Naive thymus-derived CD4-positive, alpha-beta T cell (primary cell): ENCODE measurements at regions of chr3 and their contacts with region 1.

Region 1: DNA sequence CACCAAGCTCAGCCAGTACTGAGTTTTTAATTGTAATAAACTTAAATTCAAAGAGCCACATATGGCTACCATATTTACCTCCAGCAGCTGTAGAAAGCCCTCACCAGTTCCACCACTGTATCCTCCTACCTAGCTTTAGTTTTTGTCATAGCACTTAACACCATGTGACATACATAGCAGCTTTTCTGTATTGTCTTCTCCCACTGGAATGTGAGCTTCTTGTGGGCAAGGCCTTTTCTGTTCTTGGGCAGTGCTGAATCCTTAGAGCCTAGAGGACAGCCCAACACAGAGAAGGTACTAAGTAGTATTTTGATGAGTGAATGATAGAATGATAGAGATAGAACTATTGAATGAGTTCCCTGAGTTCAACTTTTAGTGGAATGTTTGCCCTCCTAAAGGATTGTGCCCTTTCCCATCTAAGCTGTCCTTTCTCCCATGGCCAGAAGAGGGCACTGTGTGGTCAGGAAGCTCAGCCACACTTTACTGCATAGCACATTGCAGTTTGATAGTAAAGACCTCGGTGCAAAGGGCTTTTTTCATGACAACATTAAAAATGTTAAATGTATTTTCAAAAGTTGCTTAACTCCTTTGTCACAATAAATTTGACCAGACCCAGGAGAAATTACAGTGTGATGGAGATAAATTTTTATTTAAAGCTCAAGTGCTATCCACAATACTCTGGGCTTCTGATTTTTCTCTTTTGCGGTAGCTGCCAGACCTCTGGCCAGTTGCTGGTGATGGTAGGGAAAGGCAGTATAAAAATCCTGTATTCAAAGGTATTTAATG is 115.8 kb downstream of the GHSR start:
- DNase-seq: peak; percentile 3 to 55 (median 41)
- ATAC-seq: peak; percentile 92
- H3K4me3 ChIP-seq: no peak overlapping the region
- H3K4me3 Mint-ChIP-seq: no peak overlapping the region
- H3K27ac ChIP-seq: no peak overlapping the region
- H3K27ac Mint-ChIP-seq: peak overlapping the region in 2 of 9 donors; percentile 12 to 36
- H3K4me1 ChIP-seq: no peaks in the 10 kb centered on the region
- H3K4me1 Mint-ChIP-seq: peaks cover 0 to 10% (median 4%) of the 10 kb centered on the region in 7 donors
- H3K27me3 ChIP-seq: no peaks in the 10 kb centered on the region
- H3K27me3 Mint-ChIP-seq: no peaks in the 10 kb centered on the region

Region 2: DNA sequence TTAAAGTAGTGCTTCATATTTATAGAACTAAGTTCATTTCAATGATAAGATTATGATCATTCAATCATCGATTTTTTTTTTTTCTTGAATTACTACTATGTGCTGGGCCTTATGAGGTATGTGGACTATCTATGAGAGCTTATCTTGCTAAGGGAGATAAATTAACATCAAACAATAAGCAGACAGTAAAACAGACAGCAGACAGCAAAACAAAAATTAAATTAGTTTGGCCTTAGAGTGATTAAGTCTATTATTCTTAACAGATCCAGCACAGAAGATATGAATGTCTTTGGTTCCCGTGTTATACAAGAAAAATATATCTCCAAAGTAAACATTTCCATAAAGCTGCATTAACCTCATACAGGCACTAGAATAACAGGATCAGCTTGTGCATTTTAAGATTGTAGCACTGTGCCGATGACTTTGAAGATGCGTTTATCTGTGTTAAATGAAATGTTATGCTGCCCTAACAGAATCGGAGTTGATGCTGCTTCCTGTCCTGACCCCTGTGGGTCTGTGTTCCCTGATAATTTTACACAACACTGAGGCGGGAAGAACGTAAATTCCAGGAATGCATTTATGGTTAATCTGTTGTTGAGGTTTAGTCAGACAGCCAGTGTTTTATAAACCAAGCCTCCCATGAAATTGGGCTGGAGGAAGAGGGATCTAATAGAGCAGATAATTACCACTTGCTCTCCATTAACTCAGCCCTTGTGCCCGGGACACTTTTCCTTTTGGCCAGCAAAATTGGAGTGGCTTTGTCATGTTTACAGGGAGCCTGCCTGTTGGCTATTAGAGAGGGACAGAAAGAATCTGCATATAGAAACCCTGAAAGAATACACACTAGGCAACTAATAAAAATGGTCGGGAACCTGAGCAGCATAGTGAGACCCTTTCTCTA is 35.0 kb after region 1 on chr3:
- CTCF ChIA-PET with region 1: no interaction called
- POLR2A ChIA-PET with region 1: no interaction called
- intact Hi-C with region 1: no loop called
- DNase-seq: no peak
- ATAC-seq: no peak
- H3K4me3 ChIP-seq: no peak overlapping the region
- H3K4me3 Mint-ChIP-seq: no peak overlapping the region
- H3K27ac ChIP-seq: no peak overlapping the region
- H3K27ac Mint-ChIP-seq: no peak overlapping the region
- H3K4me1 ChIP-seq: no peaks in the 10 kb centered on the region
- H3K4me1 Mint-ChIP-seq: no peaks in the 10 kb centered on the region
- H3K27me3 ChIP-seq: no peaks in the 10 kb centered on the region
- H3K27me3 Mint-ChIP-seq: no peaks in the 10 kb centered on the region

Region 3: GRCh38 chr3:172384836-172385235 is 52.4 kb after region 1 on chr3:
- CTCF ChIA-PET with region 1: no interaction called
- POLR2A ChIA-PET with region 1: no interaction called
- intact Hi-C with region 1: no loop called
- DNase-seq: no peak
- ATAC-seq: no peak
- H3K4me3 ChIP-seq: no peak overlapping the region
- H3K4me3 Mint-ChIP-seq: no peak overlapping the region
- H3K27ac ChIP-seq: no peak overlapping the region
- H3K27ac Mint-ChIP-seq: no peak overlapping the region
- H3K4me1 ChIP-seq: no peaks in the 10 kb centered on the region
- H3K4me1 Mint-ChIP-seq: peaks cover 0 to 2% (median 0%) of the 10 kb centered on the region in 7 donors
- H3K27me3 ChIP-seq: no peaks in the 10 kb centered on the region
- H3K27me3 Mint-ChIP-seq: no peaks in the 10 kb centered on the region

Region 4: DNA sequence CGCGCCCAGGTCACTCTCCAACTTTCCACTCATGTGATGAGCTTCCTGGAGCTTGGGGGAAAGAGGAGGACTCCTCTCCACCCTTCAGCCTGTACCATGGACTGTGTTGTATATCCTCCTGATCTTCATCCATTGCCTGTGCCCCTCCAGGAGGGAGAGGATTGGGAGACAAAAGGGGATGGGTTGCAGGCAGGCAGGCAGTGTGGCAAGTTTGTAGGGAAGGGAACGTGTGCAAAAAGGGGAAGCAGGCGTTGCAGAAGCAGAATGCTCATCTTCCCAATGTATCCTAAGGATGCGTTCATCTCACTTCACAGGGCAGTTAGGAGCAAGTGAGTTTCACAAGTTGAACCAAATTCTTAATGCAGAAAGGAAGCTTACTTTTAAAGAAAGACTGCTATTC is 143.9 kb after region 1 on chr3:
- CTCF ChIA-PET with region 1: no interaction called
- POLR2A ChIA-PET with region 1: no interaction called
- intact Hi-C with region 1: loop called (anchors 1 to 5 kb)
- DNase-seq: no peak
- ATAC-seq: no peak
- H3K4me3 ChIP-seq: peak overlapping the region; percentile 61
- H3K4me3 Mint-ChIP-seq: peak overlapping the region; percentile 27 to 95 (median 90)
- H3K27ac ChIP-seq: no peak overlapping the region
- H3K27ac Mint-ChIP-seq: no peak overlapping the region
- H3K4me1 ChIP-seq: no peaks in the 10 kb centered on the region
- H3K4me1 Mint-ChIP-seq: peaks cover 5 to 18% (median 12%) of the 10 kb centered on the region in 7 donors
- H3K27me3 ChIP-seq: no peaks in the 10 kb centered on the region
- H3K27me3 Mint-ChIP-seq: peaks cover 0 to 10% (median 4%) of the 10 kb centered on the region in 5 donors

Region 5: GRCh38 chr3:172622916-172623700 is 290.7 kb after region 1 on chr3:
- CTCF ChIA-PET with region 1: interaction called, 3 read pairs
- POLR2A ChIA-PET with region 1: no interaction called
- intact Hi-C with region 1: loop called (anchors 1 to 2 kb)
- DNase-seq: peak in 7 of 9 donors; percentile 16 to 48 (median 34)
- ATAC-seq: peak; percentile 75
- H3K4me3 ChIP-seq: no peak overlapping the region
- H3K4me3 Mint-ChIP-seq: peak overlapping the region in 8 of 10 donors; percentile 37 to 71 (median 50)
- H3K27ac ChIP-seq: no peak overlapping the region
- H3K27ac Mint-ChIP-seq: no peak overlapping the region
- H3K4me1 ChIP-seq: no peaks in the 10 kb centered on the region
- H3K4me1 Mint-ChIP-seq: peaks cover 0 to 12% (median 6%) of the 10 kb centered on the region in 7 donors
- H3K27me3 ChIP-seq: no peaks in the 10 kb centered on the region
- H3K27me3 Mint-ChIP-seq: no peaks in the 10 kb centered on the region

Region 6: GRCh38 chr3:172673210-172673679 is 340.8 kb after region 1 on chr3:
- CTCF ChIA-PET with region 1: interaction called, 8 read pairs
- POLR2A ChIA-PET with region 1: no interaction called
- intact Hi-C with region 1: loop called in 1 of 2 experiments (anchors 2 kb)
- DNase-seq: peak; percentile 10 to 61 (median 27)
- ATAC-seq: peak; percentile 70
- H3K4me3 ChIP-seq: no peak overlapping the region
- H3K4me3 Mint-ChIP-seq: no peak overlapping the region
- H3K27ac ChIP-seq: no peak overlapping the region
- H3K27ac Mint-ChIP-seq: no peak overlapping the region
- H3K4me1 ChIP-seq: no peaks in the 10 kb centered on the region
- H3K4me1 Mint-ChIP-seq: peaks cover 0 to 21% (median 2%) of the 10 kb centered on the region in 7 donors
- H3K27me3 ChIP-seq: no peaks in the 10 kb centered on the region
- H3K27me3 Mint-ChIP-seq: no peaks in the 10 kb centered on the region